Activated CD4-positive, alpha-beta T cell treated with anti-CD3 and anti-CD28 coated beads for 36 hours (primary cell): ENCODE measurements at regions of chr17 and their contacts with region 1.

Region 1: GRCh38 chr17:2416010-2416734 is 15.3 kb upstream of the MNT start:
- DNase-seq: peak; percentile 90
- ATAC-seq: peak; percentile 82
- H3K4me3 Mint-ChIP-seq: no peak overlapping the region
- H3K27ac Mint-ChIP-seq: no peak overlapping the region
- H3K4me1 Mint-ChIP-seq: peaks cover 4% of the 10 kb centered on the region
- H3K27me3 Mint-ChIP-seq: no peaks in the 10 kb centered on the region

Region 2: DNA sequence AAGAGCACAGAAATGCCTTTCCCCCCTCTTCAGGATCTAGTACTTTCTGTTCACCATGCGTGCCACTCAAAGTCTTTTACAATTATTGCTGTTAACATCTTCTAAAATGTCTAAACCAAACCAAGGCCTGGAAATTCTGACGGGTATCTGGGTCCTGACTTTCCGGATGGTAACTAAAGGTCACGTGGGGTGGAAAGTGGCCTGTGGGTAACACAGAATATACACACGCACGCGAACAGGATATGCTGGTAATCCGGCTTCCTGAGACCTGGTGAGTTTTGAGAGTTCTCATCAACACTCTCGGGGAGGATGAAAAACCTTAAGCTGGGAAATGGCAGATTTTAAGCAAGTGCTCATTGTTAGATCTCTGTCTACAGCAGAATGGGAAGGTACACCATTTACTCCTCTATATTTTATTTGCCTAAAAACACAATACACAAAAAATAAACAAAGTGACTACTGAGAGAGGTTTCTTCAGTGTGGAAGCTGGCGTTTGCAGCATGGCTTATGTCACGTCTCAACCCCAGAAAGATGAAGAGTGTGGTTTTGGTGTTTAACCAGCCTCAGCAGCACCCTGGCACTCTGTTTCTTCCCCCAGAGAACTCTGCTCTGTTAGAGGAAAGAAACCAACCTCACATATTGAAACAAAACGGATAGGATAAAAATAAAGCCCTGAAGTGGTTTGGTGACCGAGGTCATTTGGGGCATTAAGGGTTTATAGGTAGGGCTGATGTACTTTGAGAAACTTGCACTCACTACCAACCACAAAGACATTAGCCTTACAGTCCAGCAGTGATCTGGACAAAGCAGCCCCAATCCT is 149.9 kb before region 1 on chr17:
- CTCF ChIA-PET with region 1: no interaction called
- POLR2A ChIA-PET with region 1: no interaction called
- intact Hi-C with region 1: no loop called
- DNase-seq: peak; percentile 93
- ATAC-seq: peak; percentile 76
- H3K4me3 Mint-ChIP-seq: peak overlapping the region; percentile 72
- H3K27ac Mint-ChIP-seq: peak overlapping the region; percentile 98
- H3K4me1 Mint-ChIP-seq: peaks cover 86% of the 10 kb centered on the region
- H3K27me3 Mint-ChIP-seq: no peaks in the 10 kb centered on the region

Region 3: GRCh38 chr17:2427215-2427614 is 11.0 kb after region 1 on chr17:
- CTCF ChIA-PET with region 1: interaction called, 21 read pairs
- POLR2A ChIA-PET with region 1: no interaction called
- intact Hi-C with region 1: no loop called
- DNase-seq: no peak
- ATAC-seq: no peak
- H3K4me3 Mint-ChIP-seq: no peak overlapping the region
- H3K27ac Mint-ChIP-seq: no peak overlapping the region
- H3K4me1 Mint-ChIP-seq: no peaks in the 10 kb centered on the region
- H3K27me3 Mint-ChIP-seq: no peaks in the 10 kb centered on the region

Region 4: GRCh38 chr17:2435181-2435741 is 19.1 kb after region 1 on chr17:
- CTCF ChIA-PET with region 1: interaction called, 17 read pairs
- POLR2A ChIA-PET with region 1: no interaction called
- intact Hi-C with region 1: no loop called
- DNase-seq: no peak
- ATAC-seq: no peak
- H3K4me3 Mint-ChIP-seq: no peak overlapping the region
- H3K27ac Mint-ChIP-seq: no peak overlapping the region
- H3K4me1 Mint-ChIP-seq: peaks cover 8% of the 10 kb centered on the region
- H3K27me3 Mint-ChIP-seq: no peaks in the 10 kb centered on the region

Region 5: DNA sequence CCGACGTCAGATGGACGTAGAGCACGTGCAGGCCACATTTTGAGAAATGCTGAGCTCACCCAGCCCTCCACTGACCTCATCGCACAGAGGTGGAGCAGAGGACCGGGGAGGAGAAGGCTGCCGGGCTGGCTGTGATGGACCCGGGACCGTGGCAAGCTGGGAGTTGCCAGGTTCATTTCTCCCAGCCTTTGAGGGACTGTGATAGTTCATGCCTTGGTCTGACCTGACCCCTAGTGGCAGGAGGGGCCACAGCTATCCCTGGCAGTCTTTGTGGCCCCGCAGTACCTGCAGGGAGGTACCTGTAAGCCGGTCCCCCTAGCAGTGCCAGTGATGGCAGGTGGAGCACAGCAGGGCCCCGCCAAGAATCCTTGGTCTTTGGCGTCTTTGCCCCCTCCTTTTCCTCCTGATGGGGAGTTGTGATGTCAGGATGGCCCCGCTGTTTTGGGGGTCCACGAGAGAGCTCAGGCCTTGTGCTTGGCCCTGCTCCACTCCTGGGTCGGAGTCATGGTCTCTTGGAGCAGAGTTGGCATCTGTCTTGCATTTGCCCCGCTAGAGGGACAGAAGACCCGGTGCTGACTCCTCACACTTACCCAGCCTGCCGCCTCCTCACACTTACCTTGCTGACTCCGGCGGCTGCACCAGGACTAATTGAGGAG is 596.9 kb after region 1 on chr17:
- CTCF ChIA-PET with region 1: no interaction called
- POLR2A ChIA-PET with region 1: no interaction called
- intact Hi-C with region 1: no loop called
- DNase-seq: peak; percentile 78
- ATAC-seq: peak; percentile 87
- H3K4me3 Mint-ChIP-seq: no peak overlapping the region
- H3K27ac Mint-ChIP-seq: no peak overlapping the region
- H3K4me1 Mint-ChIP-seq: no peaks in the 10 kb centered on the region
- H3K27me3 Mint-ChIP-seq: no peaks in the 10 kb centered on the region